ENCODE measurements at regions of chr17 and their contacts with region 1.

Region 1: GRCh38 chr17:75749545-75750389 is 15.2 kb downstream of the GALK1 start:
- DNase-seq: peak; percentile 77 to 88
- H3K4me3 ChIP-seq: no peak overlapping the region
- H3K4me3 Mint-ChIP-seq: no peak overlapping the region
- H3K27ac Mint-ChIP-seq: no peak overlapping the region
- H3K4me1 ChIP-seq: peaks cover 4% of the 10 kb centered on the region; the same call in 1 of the 2 replicates
- H3K4me1 Mint-ChIP-seq: peaks cover 4% of the 10 kb centered on the region
- H3K27me3 ChIP-seq: no peaks in the 10 kb centered on the region
- H3K27me3 Mint-ChIP-seq: no peaks in the 10 kb centered on the region
- CTCF ChIP-seq: peak; percentile 86 to 97

Region 2: DNA sequence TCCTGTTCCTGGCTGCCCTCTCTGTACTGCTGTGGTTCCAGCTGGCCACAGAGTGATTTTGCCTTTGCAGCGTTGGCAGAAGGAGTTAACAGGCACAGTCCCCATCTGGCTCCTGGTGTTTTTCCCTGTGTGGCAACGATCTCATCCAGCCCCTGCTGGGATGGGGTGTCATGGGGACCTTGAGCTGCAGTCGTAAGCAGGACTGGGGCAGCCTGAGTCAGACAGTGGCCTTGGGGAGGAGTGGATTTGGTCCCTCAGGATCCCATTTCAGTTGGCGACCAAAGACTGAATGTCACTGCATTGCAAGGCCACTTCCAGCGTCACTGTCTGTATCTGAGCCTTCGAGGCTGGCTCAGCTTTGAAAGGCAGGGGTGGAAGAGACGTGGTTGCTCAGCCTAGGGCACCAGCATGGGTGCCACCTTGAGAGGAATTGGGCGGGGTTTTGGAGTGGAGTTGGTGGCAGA is 281.4 kb before region 1 on chr17:
- CTCF ChIA-PET with region 1: no interaction called
- POLR2A ChIA-PET with region 1: no interaction called
- intact Hi-C with region 1: no loop called
- DNase-seq: no peak
- H3K4me3 ChIP-seq: no peak overlapping the region
- H3K4me3 Mint-ChIP-seq: no peak overlapping the region
- H3K27ac Mint-ChIP-seq: no peak overlapping the region
- H3K4me1 ChIP-seq: 0 out of 2 replicates have a peak, but pooled peaks cover 1% of the 10 kb centered on the region
- H3K4me1 Mint-ChIP-seq: no peaks in the 10 kb centered on the region
- H3K27me3 ChIP-seq: no peaks in the 10 kb centered on the region
- H3K27me3 Mint-ChIP-seq: no peaks in the 10 kb centered on the region
- CTCF ChIP-seq: no peak

Region 3: GRCh38 chr17:75639771-75640316 is 109.9 kb before region 1 on chr17:
- CTCF ChIA-PET with region 1: interaction called, 14 read pairs
- POLR2A ChIA-PET with region 1: no interaction called
- intact Hi-C with region 1: no loop called
- DNase-seq: peak; percentile 73 to 74
- H3K4me3 ChIP-seq: no peak overlapping the region
- H3K4me3 Mint-ChIP-seq: no peak overlapping the region
- H3K27ac Mint-ChIP-seq: peak overlapping the region; percentile 57
- H3K4me1 ChIP-seq: peaks cover 32% of the 10 kb centered on the region
- H3K4me1 Mint-ChIP-seq: peaks cover 3% of the 10 kb centered on the region
- H3K27me3 ChIP-seq: no peaks in the 10 kb centered on the region
- H3K27me3 Mint-ChIP-seq: no peaks in the 10 kb centered on the region
- CTCF ChIP-seq: peak; percentile 16 to 53

Region 4: DNA sequence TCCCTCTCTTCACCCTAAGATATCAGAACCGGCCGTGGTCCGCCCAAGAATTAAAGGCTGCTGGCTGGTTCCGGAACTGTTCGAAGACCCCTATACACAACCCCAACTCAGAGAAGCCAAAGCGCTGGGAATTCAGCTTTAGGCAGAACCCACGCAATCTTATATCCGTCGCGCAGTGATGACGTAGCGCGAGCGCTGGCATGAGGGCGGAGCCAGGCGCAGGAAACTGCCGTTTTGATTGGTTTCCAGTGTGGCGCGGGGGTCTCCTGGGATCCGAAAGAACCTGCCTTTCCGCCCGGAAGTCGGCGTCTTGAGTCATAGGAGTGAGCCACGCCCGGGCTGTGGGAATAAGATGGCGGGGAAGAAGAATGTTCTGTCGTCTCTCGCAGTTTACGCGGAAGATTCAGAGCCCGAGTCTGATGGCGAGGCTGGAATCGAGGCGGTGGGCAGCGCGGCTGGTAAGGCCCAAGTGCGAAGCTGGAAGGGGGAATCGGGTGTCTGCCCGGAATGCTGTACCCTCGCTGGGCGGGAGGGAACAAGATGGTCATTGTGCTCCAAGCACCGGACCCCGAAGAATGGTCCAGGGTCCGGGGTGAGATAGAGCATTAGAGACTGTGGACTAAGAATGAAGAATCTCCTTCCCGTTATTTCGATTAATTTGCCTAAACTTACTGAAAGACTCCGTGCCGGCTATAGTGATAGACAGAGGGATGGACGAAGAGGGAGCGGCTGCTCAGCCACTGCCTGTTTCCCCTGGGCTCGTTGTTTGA is 82.6 kb before region 1 on chr17 and contains the starts of genes RECQL5 and SAP30BP:
- CTCF ChIA-PET with region 1: interaction called, 17 read pairs
- POLR2A ChIA-PET with region 1: no interaction called
- intact Hi-C with region 1: no loop called
- DNase-seq: peak; percentile 97 to 98
- H3K4me3 ChIP-seq: peak within 1 kb of the TSS; percentile 96
- H3K4me3 Mint-ChIP-seq: no peak within 1 kb of the TSS
- H3K27ac Mint-ChIP-seq: peak within 1 kb of the TSS; percentile 10
- H3K4me1 ChIP-seq: peaks cover 13% of the 10 kb centered on the region
- H3K4me1 Mint-ChIP-seq: no peaks in the 10 kb centered on the region
- H3K27me3 ChIP-seq: no peaks in the 10 kb centered on the region
- H3K27me3 Mint-ChIP-seq: no peaks in the 10 kb centered on the region
- CTCF ChIP-seq: no peak
- total RNA-seq, gene RECQL5: 67.0 and 67.7 TPM in 2 replicates
- total RNA-seq, gene SAP30BP: 119 and 126 TPM in 2 replicates

Region 5: DNA sequence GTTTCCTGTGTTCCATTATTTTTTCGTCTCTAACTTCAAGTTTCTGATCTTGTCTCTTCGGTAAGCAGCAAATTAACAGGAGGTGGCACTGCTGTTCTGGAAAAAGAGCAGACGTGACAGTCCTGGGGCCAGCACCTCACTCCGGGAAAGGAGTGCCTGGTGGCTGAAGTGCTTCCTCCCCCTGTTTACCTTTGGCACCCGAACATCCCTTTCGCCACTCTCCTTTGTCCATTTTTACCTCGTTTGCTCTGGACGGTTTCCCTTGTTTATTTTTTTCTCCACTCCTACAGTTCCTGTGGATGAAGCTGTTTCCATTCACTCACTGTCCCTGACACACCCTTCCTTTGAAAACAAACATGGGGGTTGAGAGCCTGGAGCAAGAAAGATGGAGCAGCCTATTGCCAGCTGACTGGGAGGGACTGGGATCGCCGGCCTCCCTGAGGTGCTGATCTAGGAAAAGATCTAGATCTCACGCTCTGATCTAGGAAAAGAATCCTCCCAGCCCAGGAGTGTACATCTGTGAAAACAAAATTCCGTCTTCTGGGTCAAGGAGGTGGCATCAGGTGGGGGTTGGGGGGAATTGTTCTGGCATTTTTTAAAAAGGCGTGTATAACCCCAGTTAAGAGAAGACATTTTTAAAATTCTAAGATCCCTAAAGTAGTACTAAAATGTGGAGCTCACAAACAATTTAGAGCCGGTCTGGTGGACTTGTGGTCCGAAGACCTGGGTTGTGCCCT is 69.9 kb before region 1 on chr17:
- CTCF ChIA-PET with region 1: interaction called, 14 read pairs
- POLR2A ChIA-PET with region 1: interaction called, 3 read pairs
- intact Hi-C with region 1: loop called (anchors 1 kb)
- DNase-seq: peak; percentile 30 to 58
- H3K4me3 ChIP-seq: no peak overlapping the region
- H3K4me3 Mint-ChIP-seq: peak overlapping the region; percentile 4
- H3K27ac Mint-ChIP-seq: peak overlapping the region; percentile 27
- H3K4me1 ChIP-seq: peaks cover 18% of the 10 kb centered on the region
- H3K4me1 Mint-ChIP-seq: peaks cover 23% of the 10 kb centered on the region
- H3K27me3 ChIP-seq: no peaks in the 10 kb centered on the region
- H3K27me3 Mint-ChIP-seq: no peaks in the 10 kb centered on the region
- CTCF ChIP-seq: peak; percentile 16 to 30

Region 6: GRCh38 chr17:75764711-75765421 is 15.1 kb after region 1 on chr17 and contains the start of gene GALK1:
- CTCF ChIA-PET with region 1: interaction called, 20 read pairs
- POLR2A ChIA-PET with region 1: no interaction called
- intact Hi-C with region 1: no loop called
- DNase-seq: peak; percentile 73 to 81
- H3K4me3 ChIP-seq: peak within 1 kb of the TSS; percentile 75
- H3K4me3 Mint-ChIP-seq: peak within 1 kb of the TSS; percentile 75
- H3K27ac Mint-ChIP-seq: peak within 1 kb of the TSS; percentile 75
- H3K4me1 ChIP-seq: peaks cover 24% of the 10 kb centered on the region
- H3K4me1 Mint-ChIP-seq: peaks cover 5% of the 10 kb centered on the region
- H3K27me3 ChIP-seq: no peaks in the 10 kb centered on the region
- H3K27me3 Mint-ChIP-seq: no peaks in the 10 kb centered on the region
- CTCF ChIP-seq: peak; percentile 65 to 73
- total RNA-seq, gene GALK1: 41.1 and 45.0 TPM in 2 replicates

Region 7: GRCh38 chr17:75978938-75979704 is 229.4 kb after region 1 on chr17 and contains the starts of genes ACOX1 and TEN1:
- CTCF ChIA-PET with region 1: no interaction called
- POLR2A ChIA-PET with region 1: no interaction called
- intact Hi-C with region 1: no loop called
- DNase-seq: peak; percentile 99
- H3K4me3 ChIP-seq: peak within 1 kb of the TSS; percentile 88
- H3K4me3 Mint-ChIP-seq: peak within 1 kb of the TSS; percentile 97
- H3K27ac Mint-ChIP-seq: peak within 1 kb of the TSS; percentile 100
- H3K4me1 ChIP-seq: peaks cover 59% of the 10 kb centered on the region
- H3K4me1 Mint-ChIP-seq: peaks cover 49% of the 10 kb centered on the region
- H3K27me3 ChIP-seq: no peaks in the 10 kb centered on the region
- H3K27me3 Mint-ChIP-seq: no peaks in the 10 kb centered on the region
- CTCF ChIP-seq: peak; percentile 24 to 30
- total RNA-seq, gene ACOX1: 43.7 and 48.3 TPM in 2 replicates
- total RNA-seq, gene TEN1: 19.1 and 20.3 TPM in 2 replicates